AG04449 (cell line): ENCODE measurements at regions of chr5 and their contacts with region 1.

Region 1: GRCh38 chr5:33180900-33181299 is 259.9 kb upstream of the TARS1 start:
- DNase-seq: peak; percentile 5
- H3K4me3 ChIP-seq: no peak overlapping the region
- CTCF ChIP-seq: peak; percentile 32

Region 2: GRCh38 chr5:32726086-32726557 is 454.8 kb before region 1 on chr5:
- CTCF ChIA-PET with region 1: no interaction called
- POLR2A ChIA-PET with region 1: no interaction called
- DNase-seq: no peak
- H3K4me3 ChIP-seq: no peak overlapping the region
- CTCF ChIP-seq: no peak

Region 3: DNA sequence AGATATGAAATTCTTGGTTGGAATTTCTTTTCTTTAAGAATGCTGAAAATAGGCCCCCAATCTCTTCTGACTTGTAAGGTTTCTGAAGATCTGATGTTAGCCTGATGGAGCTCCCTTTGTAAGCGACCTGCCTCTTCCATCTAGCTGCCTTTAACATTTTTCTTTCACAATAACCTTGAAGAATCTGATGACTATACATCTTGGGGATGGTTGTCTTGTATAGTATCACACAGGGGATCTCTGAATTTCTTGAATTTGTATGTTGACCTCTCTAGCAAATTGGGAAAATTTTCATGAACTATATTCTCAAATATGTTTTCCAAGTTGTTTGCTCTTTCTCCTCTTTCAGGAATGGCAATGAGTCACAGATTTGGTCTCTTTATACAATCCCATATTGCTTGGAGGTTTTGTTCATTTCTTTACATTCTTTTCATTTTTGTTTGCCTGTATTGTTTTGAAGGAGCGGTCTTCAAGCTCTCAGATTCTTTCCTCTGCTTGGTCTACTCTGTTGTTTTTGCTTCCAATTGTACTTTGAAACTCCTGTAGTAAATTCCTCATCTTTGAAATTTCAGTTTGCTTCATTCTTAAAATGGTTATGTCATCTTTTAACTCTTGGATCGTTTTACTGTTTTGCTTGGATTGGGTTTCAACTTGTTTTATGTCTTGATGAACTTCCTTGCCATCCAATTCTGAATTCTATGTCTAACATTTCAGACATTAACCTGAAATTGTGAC is 14.7 kb after region 1 on chr5:
- CTCF ChIA-PET with region 1: interaction called, 11 read pairs
- POLR2A ChIA-PET with region 1: no interaction called
- DNase-seq: peak; percentile 41
- H3K4me3 ChIP-seq: no peak overlapping the region
- CTCF ChIP-seq: no peak